Prostate gland (tissue), 2 donors: ENCODE measurements at regions of chr2 and their contacts with region 1.

Region 1: DNA sequence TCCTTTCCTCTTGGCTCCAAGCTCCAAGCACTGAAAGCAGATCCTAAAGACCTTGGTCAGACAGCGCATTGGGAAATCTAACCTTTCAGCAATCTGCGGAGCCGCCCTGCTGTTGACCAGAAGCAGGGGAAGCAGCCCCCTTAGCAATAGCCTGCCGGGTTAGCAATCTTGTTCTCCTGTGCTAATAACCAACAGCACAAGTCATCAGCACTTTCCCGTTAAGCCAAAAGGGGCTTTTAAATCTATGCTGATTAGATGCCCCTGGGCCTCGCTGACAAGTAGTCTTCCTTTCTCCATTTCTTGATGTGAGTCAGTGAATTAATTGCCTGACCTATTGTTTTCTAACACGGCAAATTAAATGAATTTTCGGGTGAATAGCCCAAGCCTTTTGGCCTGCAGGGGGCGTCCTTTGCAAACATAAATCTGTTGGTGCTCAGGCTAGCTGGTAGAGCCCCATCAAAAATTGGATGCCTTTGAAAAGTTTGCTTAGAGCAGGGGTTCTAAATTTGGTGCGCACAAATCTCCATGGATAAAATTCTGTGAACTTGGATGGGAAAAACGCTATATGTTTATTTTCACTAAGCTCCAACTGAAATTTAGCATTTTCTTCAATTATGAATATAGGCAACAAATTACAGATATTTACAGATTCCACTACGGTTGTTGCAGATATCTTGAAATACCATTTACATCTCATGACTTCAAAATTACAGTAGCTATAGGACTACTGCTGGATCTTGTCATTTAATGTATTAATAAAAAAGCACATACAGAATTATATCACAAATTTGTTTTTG is 24.6 kb downstream of the MAIP1 start:
- DNase-seq: peak; percentile 80
- H3K4me3 ChIP-seq: no peak overlapping the region
- H3K27ac ChIP-seq: no peak overlapping the region
- H3K4me1 ChIP-seq: no peaks in the 10 kb centered on the region
- H3K27me3 ChIP-seq: no peaks in the 10 kb centered on the region
- CTCF ChIP-seq: peak; percentile 81 to 93 (median 86)
- POLR2A ChIP-seq: no peak

Region 2: DNA sequence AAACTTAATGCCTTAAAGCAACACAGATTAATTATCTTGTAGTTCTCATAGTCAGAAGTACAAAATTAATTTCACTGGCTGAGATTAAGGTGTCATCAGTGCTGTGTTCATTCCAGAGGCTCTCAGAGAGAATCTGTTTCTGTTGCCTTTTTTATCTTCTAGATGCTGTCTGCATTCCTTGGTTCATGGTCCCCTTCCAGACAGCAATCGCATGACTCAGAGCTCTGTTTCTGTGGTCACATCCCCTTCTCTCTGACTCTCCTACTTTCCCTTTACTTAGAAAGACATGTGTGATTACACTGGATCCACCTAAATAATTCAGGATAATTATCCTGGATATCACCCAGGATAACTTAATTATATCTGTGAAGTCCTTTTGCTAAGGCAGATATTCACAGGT is 124.0 kb after region 1 on chr2:
- intact Hi-C with region 1: no loop called
- DNase-seq: no peak
- H3K4me3 ChIP-seq: no peak overlapping the region
- H3K27ac ChIP-seq: no peak overlapping the region
- H3K4me1 ChIP-seq: no peaks in the 10 kb centered on the region
- H3K27me3 ChIP-seq: no peaks in the 10 kb centered on the region
- CTCF ChIP-seq: no peak
- POLR2A ChIP-seq: no peak

Region 3: GRCh38 chr2:200483729-200484198 is 503.7 kb after region 1 on chr2:
- intact Hi-C with region 1: loop called (anchors 5 kb)
- DNase-seq: peak; percentile 71
- H3K4me3 ChIP-seq: no peak overlapping the region
- H3K27ac ChIP-seq: peak overlapping the region; percentile 3 to 15
- H3K4me1 ChIP-seq: peaks cover 8% of the 10 kb centered on the region
- H3K27me3 ChIP-seq: no peaks in the 10 kb centered on the region
- CTCF ChIP-seq: peak in 3 of 4 experiments; percentile 26 to 72 (median 66)
- POLR2A ChIP-seq: no peak